Activated B cell treated with CpG ODN at 0.5 μM for 24 hours (primary cell): ENCODE measurements at regions of chr13 and their contacts with region 1.

Region 1: GRCh38 chr13:112873851-112874750 is 94.9 kb upstream of the MCF2L start:
- DNase-seq: peak; percentile 83
- ATAC-seq: peak; percentile 86
- H3K4me3 Mint-ChIP-seq: peak overlapping the region; percentile 79
- H3K27ac Mint-ChIP-seq: peak overlapping the region; percentile 95
- H3K4me1 Mint-ChIP-seq: peaks cover 36% of the 10 kb centered on the region
- H3K27me3 Mint-ChIP-seq: no peaks in the 10 kb centered on the region
- CTCF ChIP-seq: peak; percentile 55

Region 2: DNA sequence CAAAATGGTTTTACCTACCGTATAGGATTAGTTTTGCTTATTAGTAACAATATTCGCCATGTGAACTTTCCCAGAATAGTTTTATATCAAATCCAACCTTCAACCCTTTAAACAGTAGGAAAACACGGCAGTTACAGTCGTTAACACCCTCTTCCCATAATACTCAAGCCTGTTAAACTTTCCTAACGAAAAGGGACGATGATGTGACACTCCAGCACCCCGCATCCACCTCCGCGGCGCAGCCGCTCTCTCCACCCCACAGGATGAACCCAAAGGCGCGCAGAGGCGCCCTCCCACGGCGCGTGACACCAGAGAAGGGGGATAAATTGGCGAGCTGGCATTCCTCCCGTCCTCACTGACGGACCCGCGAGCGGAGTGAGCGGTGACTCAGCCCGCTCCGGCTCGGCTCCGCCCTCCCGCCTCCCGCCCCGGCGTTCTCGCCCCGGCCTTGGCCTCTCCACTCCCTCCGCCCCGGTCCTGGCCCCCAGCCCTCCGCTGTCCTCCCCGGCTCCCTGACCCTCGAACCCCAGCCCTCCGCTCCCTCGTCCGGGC is 286.8 kb before region 1 on chr13:
- CTCF ChIA-PET with region 1: no interaction called
- POLR2A ChIA-PET with region 1: no interaction called
- intact Hi-C with region 1: loop called (anchors 1 kb)
- DNase-seq: peak; percentile 58
- ATAC-seq: peak; percentile 59
- H3K4me3 Mint-ChIP-seq: peak overlapping the region; percentile 94
- H3K27ac Mint-ChIP-seq: peak overlapping the region; percentile 84
- H3K4me1 Mint-ChIP-seq: peaks cover 44% of the 10 kb centered on the region
- H3K27me3 Mint-ChIP-seq: peaks cover 4% of the 10 kb centered on the region
- CTCF ChIP-seq: no peak

Region 3: DNA sequence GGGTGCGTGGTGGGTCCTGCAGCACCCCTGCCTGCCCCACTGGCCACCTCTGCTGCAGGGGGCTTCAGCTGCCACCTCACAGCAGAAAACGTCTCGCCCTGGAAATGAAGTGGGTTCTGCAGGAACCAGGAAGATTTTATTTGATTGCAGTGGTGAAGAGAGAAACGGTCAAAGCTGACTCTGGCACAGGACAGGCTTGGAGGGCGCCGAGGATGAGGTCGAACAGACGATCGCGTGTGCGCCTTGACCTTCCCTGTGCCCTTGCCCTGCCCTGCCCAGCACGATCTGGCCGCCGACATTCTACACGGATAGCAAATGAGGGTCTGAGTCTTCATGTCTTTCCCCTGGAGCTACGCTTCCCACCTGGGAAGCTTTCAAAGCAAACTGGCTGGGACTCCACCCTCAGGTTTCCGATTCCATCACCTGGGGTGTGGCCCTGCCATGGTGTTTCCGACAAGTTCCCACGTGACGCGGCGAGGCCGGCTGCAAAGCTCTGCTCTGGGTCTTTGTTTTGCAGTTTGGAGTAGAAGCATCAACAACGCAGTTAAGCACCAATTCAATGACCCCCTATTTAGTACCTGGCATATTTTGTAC is 235.8 kb before region 1 on chr13:
- CTCF ChIA-PET with region 1: interaction called, 52 read pairs
- POLR2A ChIA-PET with region 1: interaction called, 3 read pairs
- intact Hi-C with region 1: loop called (anchors 1 kb)
- DNase-seq: no peak
- ATAC-seq: no peak
- H3K4me3 Mint-ChIP-seq: no peak overlapping the region
- H3K27ac Mint-ChIP-seq: no peak overlapping the region
- H3K4me1 Mint-ChIP-seq: peaks cover 10% of the 10 kb centered on the region
- H3K27me3 Mint-ChIP-seq: peaks cover 34% of the 10 kb centered on the region
- CTCF ChIP-seq: no peak

Region 4: DNA sequence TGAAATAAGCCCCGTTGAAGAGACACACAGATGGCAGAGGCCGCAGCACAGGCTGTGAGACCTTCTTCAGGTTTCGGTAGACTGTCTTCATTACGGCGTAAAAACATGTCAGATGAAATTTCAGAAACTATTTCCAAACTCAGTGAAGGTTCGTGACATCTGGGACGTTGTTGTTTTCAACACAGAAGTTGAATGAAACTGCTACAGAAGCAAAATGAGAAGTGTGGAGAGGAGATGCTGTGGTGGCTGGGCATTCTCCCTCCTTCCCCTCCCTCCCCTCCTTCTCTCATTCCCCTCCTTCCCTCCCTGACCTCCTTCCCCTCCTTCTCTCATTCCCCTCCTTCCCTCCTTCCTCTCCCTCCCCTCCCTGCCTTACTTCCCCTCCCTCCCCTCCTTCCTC is 70.7 kb before region 1 on chr13:
- CTCF ChIA-PET with region 1: interaction called, 3 read pairs
- POLR2A ChIA-PET with region 1: no interaction called
- intact Hi-C with region 1: loop called (anchors 5 kb)
- DNase-seq: no peak
- ATAC-seq: peak; percentile 40
- H3K4me3 Mint-ChIP-seq: no peak overlapping the region
- H3K27ac Mint-ChIP-seq: peak overlapping the region; percentile 60
- H3K4me1 Mint-ChIP-seq: peaks cover 26% of the 10 kb centered on the region
- H3K27me3 Mint-ChIP-seq: no peaks in the 10 kb centered on the region
- CTCF ChIP-seq: no peak

Region 5: DNA sequence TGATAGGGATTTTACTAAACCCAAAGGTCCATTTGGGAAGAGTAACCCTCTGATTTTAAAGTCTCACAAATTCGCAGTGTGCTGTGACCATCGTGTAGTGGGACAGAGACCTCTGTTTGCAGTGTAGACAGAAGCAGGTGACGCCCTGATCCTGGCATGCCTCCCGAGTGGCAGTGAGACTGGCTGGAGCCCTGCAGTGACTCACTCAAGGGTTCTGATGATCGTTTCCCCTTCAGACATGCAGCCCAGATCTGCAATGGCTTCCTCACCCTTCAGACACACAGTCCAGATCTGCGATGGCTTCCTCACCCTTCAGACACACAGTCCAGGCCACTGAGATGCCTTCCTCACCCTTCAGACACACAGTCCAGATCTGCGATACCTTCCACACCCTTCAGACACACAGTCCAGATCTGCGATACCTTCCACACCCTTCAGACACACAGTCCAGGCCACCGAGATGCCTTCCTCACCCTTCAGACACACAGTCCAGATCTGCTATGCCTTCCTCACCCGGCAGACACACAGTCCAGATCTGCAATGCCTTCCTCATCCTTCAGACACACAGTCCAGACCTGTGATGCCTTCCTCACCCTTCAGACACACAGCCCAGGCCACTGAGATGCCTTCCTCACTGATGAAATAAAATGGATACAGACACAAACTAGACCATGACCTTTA is 59.1 kb before region 1 on chr13:
- CTCF ChIA-PET with region 1: no interaction called
- POLR2A ChIA-PET with region 1: no interaction called
- intact Hi-C with region 1: no loop called
- DNase-seq: no peak
- ATAC-seq: no peak
- H3K4me3 Mint-ChIP-seq: no peak overlapping the region
- H3K27ac Mint-ChIP-seq: no peak overlapping the region
- H3K4me1 Mint-ChIP-seq: no peaks in the 10 kb centered on the region
- H3K27me3 Mint-ChIP-seq: no peaks in the 10 kb centered on the region
- CTCF ChIP-seq: no peak